Activated naive CD4-positive, alpha-beta T cell treated with anti-CD3 and anti-CD28 coated beads for 36 hours (primary cell): ENCODE measurements at regions of chr17 and their contacts with region 1.

Region 1: DNA sequence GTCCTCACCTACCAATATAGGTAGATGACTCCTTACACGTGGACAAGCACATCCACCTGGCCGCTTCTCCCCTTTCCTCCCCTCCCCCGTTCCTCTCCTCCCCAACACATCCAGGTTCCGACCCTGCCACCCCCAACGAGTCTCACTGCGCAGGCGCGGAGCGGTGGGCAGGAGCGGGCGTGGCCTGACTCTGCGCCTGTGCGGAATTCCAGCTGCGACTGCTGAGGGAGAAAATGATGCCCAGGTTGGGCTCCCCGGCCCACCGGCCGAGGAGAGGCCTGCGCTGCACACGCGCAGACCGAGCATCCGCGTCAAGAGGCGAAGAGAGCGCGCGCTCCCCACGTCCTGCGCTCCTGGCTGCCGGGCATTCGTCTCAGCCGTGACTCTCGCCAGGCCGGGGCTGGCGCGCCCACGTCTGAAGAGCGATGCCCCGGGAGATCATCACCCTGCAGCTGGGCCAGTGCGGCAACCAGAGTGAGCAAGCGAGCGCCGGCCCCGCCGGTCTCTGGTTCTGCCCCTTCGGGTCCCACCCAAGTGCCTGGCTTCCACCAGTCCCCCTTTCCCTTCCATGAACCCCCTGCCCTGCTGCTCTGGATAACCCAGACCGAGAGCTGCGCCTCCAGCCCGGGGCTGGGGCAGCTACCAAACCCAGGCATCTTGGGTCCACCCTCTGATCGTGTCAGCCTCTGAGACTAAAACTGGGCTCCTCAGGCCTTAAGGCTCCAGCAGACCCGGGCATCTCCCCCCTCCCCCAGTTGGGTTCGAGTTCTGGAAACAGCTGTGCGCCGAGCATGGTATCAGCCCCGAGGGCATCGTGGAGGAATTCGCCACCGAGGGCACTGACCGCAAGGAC is at the start of gene TUBG2:
- DNase-seq: peak; percentile 77
- H3K4me3 Mint-ChIP-seq: peak within 1 kb of the TSS; percentile 87
- H3K27ac Mint-ChIP-seq: peak within 1 kb of the TSS; percentile 60
- H3K4me1 Mint-ChIP-seq: peaks cover 21% of the 10 kb centered on the region
- H3K27me3 Mint-ChIP-seq: no peaks in the 10 kb centered on the region
- total RNA-seq, gene TUBG2: 9.1 to 9.9 TPM

Region 2: DNA sequence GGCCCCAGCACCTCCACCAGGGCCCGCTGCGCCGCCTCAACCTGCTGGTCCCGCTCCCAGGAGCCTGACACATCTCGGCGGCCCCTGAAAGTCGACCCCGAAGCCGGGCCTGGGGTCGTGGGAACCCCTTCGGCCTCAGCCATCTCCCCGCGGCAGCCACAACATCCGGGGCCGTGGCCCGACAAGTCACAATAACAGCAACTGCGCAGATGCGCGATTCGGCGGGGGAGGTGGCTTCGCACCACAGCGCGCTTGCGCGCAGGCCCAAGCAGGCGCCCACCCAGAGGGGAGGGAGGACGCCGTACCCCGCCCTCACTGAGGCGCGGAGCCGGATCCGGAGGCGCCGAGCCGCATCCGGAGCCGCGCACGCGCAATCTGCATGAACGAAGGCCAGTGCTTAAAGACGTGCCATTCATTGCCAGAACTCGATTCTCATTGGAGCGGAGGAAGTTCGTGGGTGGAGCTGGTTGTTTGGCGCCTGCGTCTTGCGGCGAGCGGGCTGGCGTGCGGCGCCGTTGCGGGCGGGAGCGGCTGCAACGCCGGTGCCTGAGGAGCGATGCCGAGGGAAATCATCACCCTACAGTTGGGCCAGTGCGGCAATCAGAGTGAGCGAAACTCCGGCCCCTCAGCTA is 50.0 kb before region 1 on chr17 and contains the starts of genes RETREG3 and TUBG1:
- CTCF ChIA-PET with region 1: no interaction called
- intact Hi-C with region 1: loop called (anchors 5 kb)
- DNase-seq: peak; percentile 99
- H3K4me3 Mint-ChIP-seq: peak within 1 kb of the TSS; percentile 100
- H3K27ac Mint-ChIP-seq: peak within 1 kb of the TSS; percentile 93
- H3K4me1 Mint-ChIP-seq: peaks cover 45% of the 10 kb centered on the region
- H3K27me3 Mint-ChIP-seq: no peaks in the 10 kb centered on the region
- total RNA-seq, gene RETREG3: 28.6 to 33.5 TPM
- total RNA-seq, gene TUBG1: 91.3 to 92.0 TPM